Adrenal gland (tissue), 19 donors: ENCODE measurements at regions of chr1 and their contacts with region 1.

Region 1: DNA sequence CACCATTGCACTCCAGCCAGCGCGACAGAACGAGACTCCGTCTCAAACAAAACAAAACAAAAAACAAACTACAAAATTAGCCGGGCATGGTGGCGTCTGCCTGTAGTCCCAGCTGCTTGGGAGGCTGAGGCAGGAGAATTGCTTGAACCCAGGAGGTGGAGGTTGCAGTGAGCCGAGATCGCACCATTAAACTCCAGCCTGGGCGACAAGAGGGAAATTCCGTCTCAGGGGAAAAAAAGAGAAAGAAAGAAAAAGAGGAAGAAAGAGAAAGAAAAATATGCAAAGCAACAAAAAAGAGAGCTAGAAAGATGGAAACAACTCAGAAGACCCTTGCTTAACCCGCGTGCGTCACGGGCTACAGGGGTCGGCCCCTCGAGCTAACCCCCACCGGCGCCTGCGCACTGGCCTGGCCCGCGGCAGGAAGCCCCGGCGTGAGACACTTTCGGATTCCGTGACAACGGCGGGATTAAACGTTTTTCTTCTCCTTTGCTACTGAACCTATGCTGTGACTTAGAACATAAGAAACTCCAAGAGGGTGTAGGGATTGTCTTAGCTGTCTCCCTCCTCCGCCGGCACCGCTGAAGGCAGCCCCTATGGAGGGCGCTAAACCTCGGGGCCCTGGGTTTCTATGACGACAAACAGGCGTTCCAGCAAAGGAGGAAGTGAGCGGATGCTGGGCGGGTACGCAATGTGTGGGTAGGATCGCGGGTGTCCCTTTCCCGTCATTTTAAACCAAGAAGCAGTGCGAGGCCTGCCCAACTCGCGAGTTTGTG is at the start of gene AXDND1:
- DNase-seq: peak; percentile 85 to 94 (median 93)
- H3K4me3 ChIP-seq: peak within 1 kb of the TSS in 3 of 4 donors; percentile 42 to 69 (median 66)
- H3K27ac ChIP-seq: peak within 1 kb of the TSS; percentile 80 to 97 (median 90)
- H3K4me1 ChIP-seq: no peaks in the 10 kb centered on the region
- H3K27me3 ChIP-seq: no peaks in the 10 kb centered on the region
- CTCF ChIP-seq: no peak
- POLR2A ChIP-seq: peak in 1 of 2 donors; percentile 64
- total RNA-seq, gene AXDND1: 1.2 to 24.6 (median 3.8) TPM in 8 of 9 donors, not detected in the other

Region 2: DNA sequence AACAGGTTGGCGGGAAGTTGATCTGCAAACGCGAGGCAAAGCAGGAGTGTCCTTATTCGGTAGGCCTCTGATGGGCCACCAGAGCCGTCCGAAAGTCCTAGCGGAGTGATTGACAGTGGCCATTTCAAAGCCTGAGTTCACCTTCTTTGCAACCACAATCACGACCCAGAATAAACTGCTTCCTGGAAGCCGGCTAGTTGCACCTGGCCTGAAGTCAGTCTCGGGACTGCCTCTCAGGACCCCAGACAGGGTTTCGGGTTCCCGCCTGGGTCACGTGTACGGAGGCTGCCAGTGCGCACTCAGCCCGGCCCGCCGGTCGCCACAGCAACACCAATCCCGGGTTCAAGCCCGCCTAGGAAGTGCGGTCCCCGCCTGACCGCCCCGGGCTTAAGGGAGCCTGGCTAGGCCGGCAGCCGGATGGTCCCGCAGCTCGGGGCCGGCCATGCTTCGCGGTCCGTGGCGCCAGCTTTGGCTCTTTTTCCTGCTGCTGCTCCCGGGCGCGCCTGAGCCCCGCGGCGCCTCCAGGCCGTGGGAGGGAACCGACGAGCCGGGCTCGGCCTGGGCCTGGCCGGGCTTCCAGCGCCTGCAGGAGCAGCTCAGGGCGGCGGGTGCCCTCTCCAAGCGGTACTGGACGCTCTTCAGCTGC is 283.7 kb before region 1 on chr1 and contains the start of gene TOR3A:
- intact Hi-C with region 1: loop called (anchors 5 to 10 kb)
- DNase-seq: peak; percentile 92 to 96 (median 94)
- H3K4me3 ChIP-seq: peak within 1 kb of the TSS; percentile 43 to 94 (median 83)
- H3K27ac ChIP-seq: peak within 1 kb of the TSS; percentile 34 to 93 (median 67)
- H3K4me1 ChIP-seq: peaks cover 6 to 17% of the 10 kb centered on the region in 2 donors
- H3K27me3 ChIP-seq: no peaks in the 10 kb centered on the region
- CTCF ChIP-seq: peak in 1 of 6 experiments; percentile 4
- POLR2A ChIP-seq: peak; percentile 64 to 89
- total RNA-seq, gene TOR3A: 12.6 to 53.5 (median 24.7) TPM

Region 3: GRCh38 chr1:179129702-179130473 is 235.6 kb before region 1 on chr1:
- intact Hi-C with region 1: no loop called
- DNase-seq: no peak
- H3K4me3 ChIP-seq: peak overlapping the region in 2 of 4 donors; percentile 19 to 47
- H3K27ac ChIP-seq: peak overlapping the region in 4 of 5 donors; percentile 35 to 75 (median 52)
- H3K4me1 ChIP-seq: peaks cover 0 to 25% of the 10 kb centered on the region in 2 donors
- H3K27me3 ChIP-seq: no peaks in the 10 kb centered on the region
- CTCF ChIP-seq: no peak
- POLR2A ChIP-seq: no peak

Region 4: GRCh38 chr1:179251675-179252074 is 113.8 kb before region 1 on chr1:
- intact Hi-C with region 1: loop called (anchors 2 to 10 kb)
- DNase-seq: peak in 2 of 7 donors; percentile 12 to 20
- H3K4me3 ChIP-seq: no peak overlapping the region
- H3K27ac ChIP-seq: no peak overlapping the region
- H3K4me1 ChIP-seq: no peaks in the 10 kb centered on the region
- H3K27me3 ChIP-seq: no peaks in the 10 kb centered on the region
- CTCF ChIP-seq: peak; percentile 17 to 75 (median 58)
- POLR2A ChIP-seq: no peak

Region 5: GRCh38 chr1:179287946-179288345 is 77.6 kb before region 1 on chr1:
- intact Hi-C with region 1: loop called (anchors 10 kb)
- DNase-seq: no peak
- H3K4me3 ChIP-seq: no peak overlapping the region
- H3K27ac ChIP-seq: no peak overlapping the region
- H3K4me1 ChIP-seq: peaks cover 0 to 5% of the 10 kb centered on the region in 2 donors
- H3K27me3 ChIP-seq: no peaks in the 10 kb centered on the region
- CTCF ChIP-seq: no peak
- POLR2A ChIP-seq: no peak

Region 6: GRCh38 chr1:179293340-179294327 is 71.9 kb before region 1 on chr1 and contains the start of gene SOAT1:
- intact Hi-C with region 1: loop called (anchors 10 kb)
- DNase-seq: peak; percentile 97 to 98 (median 98)
- H3K4me3 ChIP-seq: peak within 1 kb of the TSS; percentile 51 to 97 (median 80)
- H3K27ac ChIP-seq: peak within 1 kb of the TSS; percentile 86 to 97 (median 94)
- H3K4me1 ChIP-seq: peaks cover 12 to 36% of the 10 kb centered on the region in 2 donors
- H3K27me3 ChIP-seq: no peaks in the 10 kb centered on the region
- CTCF ChIP-seq: peak in 1 of 6 experiments; percentile 27
- POLR2A ChIP-seq: peak; percentile 86 to 98
- total RNA-seq, gene SOAT1: 127 to 803 (median 291) TPM